ENCODE measurements at regions of chrX and their contacts with region 1.

Region 1: GRCh38 chrX:102712952-102713625 is 841 bp downstream of the GPRASP2 start:
- DNase-seq: peak; percentile 52 to 72
- H3K4me3 ChIP-seq: peak overlapping the region; percentile 65 to 75
- H3K27ac ChIP-seq: peak overlapping the region; percentile 86 to 88
- H3K4me1 ChIP-seq: peaks cover 0 to 5% (median 0%) of the 10 kb centered on the region in 4 donors
- H3K27me3 ChIP-seq: no peaks in the 10 kb centered on the region
- CTCF ChIP-seq: peak; percentile 43 to 59

Region 2: GRCh38 chrX:102599084-102599950 is 113.8 kb before region 1 on chrX and contains the start of gene ARMCX5:
- intact Hi-C with region 1: loop called (anchors 1 kb)
- DNase-seq: peak; percentile 66 to 80
- H3K4me3 ChIP-seq: peak within 1 kb of the TSS; percentile 65 to 66
- H3K27ac ChIP-seq: peak within 1 kb of the TSS; percentile 82 to 85
- H3K4me1 ChIP-seq: peaks cover 0 to 7% (median 2%) of the 10 kb centered on the region in 4 donors
- H3K27me3 ChIP-seq: no peaks in the 10 kb centered on the region
- CTCF ChIP-seq: peak in 1 of 2 experiments; percentile 28

Region 3: DNA sequence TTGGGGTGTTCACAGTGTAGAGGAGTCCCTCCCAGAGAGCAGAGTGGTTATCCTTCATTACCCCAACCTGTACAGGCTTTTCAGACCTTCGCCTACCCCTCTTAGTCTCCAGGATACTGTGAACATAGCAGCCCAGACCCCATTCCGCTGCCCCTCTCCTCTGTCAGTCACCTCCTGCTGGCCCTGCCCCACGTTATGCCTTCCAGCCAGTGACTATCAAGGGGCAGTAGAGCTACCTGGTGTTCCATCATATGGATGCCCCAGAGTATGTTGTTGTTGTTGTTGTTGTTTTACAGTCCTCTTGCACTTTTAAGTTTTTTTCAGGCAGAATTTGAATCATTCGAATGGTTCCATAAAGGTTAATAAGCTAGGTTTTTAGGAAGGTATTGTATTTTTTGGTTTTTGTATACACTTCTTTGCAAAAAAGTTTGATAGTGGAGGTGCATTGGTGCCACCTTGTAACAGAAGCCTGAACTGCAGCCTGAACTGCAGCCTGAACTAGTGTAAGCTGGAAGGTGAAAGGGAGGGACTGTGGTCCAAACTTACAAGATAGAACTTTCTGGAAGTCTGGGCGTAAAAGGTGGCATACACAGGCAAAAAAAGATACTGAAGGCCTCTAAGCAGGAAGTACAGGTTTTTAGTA is 122.5 kb after region 1 on chrX:
- intact Hi-C with region 1: no loop called
- DNase-seq: no peak
- H3K4me3 ChIP-seq: no peak overlapping the region
- H3K27ac ChIP-seq: no peak overlapping the region
- H3K4me1 ChIP-seq: no peaks in the 10 kb centered on the region
- H3K27me3 ChIP-seq: no peaks in the 10 kb centered on the region
- CTCF ChIP-seq: peak in 1 of 2 experiments; percentile 22